ENCODE measurements at regions of chr12 and their contacts with region 1.

Region 1: DNA sequence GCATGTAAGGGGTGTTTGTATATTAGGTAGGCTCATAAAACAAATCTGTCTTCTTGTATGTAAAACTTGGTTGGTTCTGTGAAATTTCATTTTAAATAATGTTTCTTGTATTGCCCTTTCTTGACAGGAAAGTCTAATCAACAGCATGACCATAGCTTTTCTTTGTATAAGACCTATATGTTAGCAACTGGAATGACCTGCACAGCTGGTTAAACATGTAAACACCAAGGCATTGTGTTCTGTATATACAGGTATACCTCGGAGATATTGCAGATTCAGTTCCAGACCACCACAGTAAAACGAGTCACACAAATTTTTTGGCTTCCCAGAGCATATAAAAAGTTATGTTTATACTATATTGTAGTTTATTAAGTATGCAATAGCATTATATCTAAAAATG is 183.6 kb downstream of the ERC1 start:
- DNase-seq: no peak
- H3K4me3 ChIP-seq: no peak overlapping the region
- CTCF ChIP-seq: no peak

Region 2: DNA sequence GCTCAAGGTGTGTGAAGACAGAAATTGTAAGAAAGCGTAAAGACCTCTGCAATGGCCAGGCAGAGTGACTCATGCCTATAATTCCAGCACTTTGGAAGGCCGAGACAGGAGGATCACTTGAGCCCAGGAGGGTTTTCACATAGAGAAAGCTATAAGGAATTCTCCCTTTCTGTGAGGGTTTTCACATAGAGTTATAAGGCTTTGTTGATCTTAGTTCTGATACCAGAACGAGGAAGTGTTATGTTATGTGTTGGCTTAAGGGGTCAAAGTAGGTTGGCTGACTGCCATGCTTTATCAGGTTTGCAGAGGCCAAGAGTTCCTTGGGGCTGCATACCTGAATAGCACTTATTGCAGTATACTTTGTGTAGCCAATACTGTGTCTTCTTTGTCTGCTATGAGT is 44.5 kb before region 1 on chr12:
- in situ Hi-C with region 1: loop called (anchors 5 kb)
- DNase-seq: no peak
- H3K4me3 ChIP-seq: no peak overlapping the region
- CTCF ChIP-seq: no peak

Region 3: GRCh38 chr12:1246637-1247036 is 72.0 kb after region 1 on chr12:
- in situ Hi-C with region 1: loop called (anchors 5 kb)
- DNase-seq: no peak
- H3K4me3 ChIP-seq: no peak overlapping the region
- CTCF ChIP-seq: no peak

Measured in astrocyte of the cerebellum (primary cell).